Mammary epithelial cell (primary cell): ENCODE measurements at regions of chr20 and their contacts with region 1.

Region 1: DNA sequence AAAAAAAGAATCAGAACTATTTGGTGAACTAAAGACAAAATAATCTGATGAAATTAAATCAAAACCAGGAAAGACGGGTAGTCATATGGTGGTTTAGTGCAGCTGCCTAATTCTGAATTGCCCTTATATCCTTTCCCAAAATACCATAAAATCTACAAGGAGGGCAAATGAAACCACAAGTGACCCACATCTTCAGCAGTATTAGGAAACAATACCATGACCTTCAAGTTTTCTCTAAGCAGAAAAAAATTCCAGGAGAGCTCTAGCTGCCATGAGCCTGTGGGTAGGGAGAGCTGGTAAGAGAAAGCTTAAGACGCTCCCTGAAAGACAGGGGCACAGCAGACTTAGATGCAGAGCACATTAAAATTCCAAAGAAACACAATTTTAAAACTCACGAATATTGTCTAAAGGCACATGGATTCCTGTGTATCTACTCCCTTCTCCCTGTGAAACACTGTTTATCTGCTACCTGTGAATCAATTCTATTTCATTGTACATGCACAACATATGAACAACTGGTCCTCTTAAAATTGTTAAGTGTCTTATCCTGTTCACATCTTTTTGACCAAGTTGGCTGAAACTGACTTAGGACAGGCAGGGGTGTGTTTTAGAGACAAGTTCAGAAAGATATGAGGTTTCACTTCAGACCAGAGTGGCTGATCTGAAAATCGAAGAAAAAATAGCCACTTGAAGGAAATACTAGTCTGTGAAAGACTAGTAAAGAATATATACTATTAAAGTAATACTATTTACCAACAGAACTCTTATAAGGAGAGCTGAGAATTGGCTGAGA is 153.6 kb upstream of the SHLD1 start:
- DNase-seq: no peak
- H3K4me3 ChIP-seq: no peak overlapping the region
- H3K27ac ChIP-seq: no peak overlapping the region
- H3K4me1 ChIP-seq: no peaks in the 10 kb centered on the region
- H3K27me3 ChIP-seq: no peaks in the 10 kb centered on the region
- CTCF ChIP-seq: no peak

Region 2: GRCh38 chr20:5080384-5080877 is 516.2 kb before region 1 on chr20:
- CTCF ChIA-PET with region 1: no interaction called
- dilution Hi-C with region 1: no loop called
- in situ Hi-C with region 1: no loop called
- intact Hi-C with region 1: no loop called
- DNase-seq: no peak
- H3K4me3 ChIP-seq: no peak overlapping the region
- H3K27ac ChIP-seq: no peak overlapping the region
- H3K4me1 ChIP-seq: no peaks in the 10 kb centered on the region
- H3K27me3 ChIP-seq: no peaks in the 10 kb centered on the region
- CTCF ChIP-seq: no peak

Region 3: DNA sequence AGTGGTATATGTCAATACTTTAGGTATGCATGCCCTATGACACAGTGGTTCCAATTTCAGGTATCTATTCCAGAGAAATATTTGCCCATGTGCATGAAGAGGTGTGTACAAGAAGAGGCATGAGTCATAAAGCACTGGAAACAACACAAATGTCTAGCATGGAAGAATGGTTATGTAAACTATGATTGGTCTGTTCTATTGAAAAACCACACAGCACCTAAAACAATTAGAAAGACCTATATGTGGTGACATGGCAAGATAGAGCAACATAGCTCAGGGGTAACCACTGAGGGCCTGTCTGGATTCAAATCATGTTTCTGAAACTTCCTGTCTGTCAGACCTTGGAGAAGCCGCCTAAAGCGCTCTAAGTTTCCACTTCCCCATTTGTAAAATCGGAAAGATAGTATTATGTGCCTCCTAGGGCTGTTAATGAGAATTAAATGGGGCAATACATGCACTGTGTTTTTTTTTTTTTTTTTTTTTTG is 77.6 kb after region 1 on chr20:
- CTCF ChIA-PET with region 1: no interaction called
- dilution Hi-C with region 1: no loop called
- in situ Hi-C with region 1: no loop called
- intact Hi-C with region 1: no loop called
- DNase-seq: peak; percentile 90
- H3K4me3 ChIP-seq: no peak overlapping the region
- H3K27ac ChIP-seq: no peak overlapping the region
- H3K4me1 ChIP-seq: peaks cover 14% of the 10 kb centered on the region
- H3K27me3 ChIP-seq: no peaks in the 10 kb centered on the region
- CTCF ChIP-seq: no peak

Region 4: DNA sequence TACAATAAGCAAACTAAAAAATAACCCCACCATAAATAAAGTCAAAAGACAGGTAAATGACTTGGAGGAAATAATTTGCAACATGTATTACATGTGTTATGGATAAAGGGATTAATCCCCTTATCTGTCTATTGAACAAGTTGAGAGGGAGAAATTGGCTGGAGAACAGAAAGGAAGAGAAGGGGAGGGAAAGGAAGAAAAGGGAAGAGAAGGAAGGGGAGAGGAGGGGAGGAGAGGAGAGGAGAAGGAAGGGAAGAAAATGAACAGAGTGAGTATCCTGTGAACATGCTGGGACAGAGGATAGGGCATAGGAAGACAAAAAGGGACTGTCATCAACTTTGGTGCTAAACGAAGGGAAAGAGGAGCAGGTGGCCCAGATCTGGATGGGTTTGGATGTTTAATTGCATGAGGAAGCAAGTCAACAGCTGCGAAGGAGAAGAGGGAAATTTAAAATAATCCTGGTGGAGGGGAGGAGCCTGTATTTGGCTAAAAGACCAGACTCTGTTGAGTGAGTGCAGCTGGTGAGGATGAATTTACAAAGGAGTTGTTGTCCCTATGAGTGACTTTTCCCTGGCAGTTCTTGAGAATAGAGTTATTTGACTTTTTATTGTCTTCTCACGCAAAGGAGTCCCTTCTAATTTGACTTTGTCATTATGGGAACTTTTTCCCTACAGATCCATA is 139.4 kb after region 1 on chr20:
- CTCF ChIA-PET with region 1: no interaction called
- dilution Hi-C with region 1: no loop called
- in situ Hi-C with region 1: no loop called
- intact Hi-C with region 1: no loop called
- DNase-seq: no peak
- H3K4me3 ChIP-seq: no peak overlapping the region
- H3K27ac ChIP-seq: no peak overlapping the region
- H3K4me1 ChIP-seq: no peaks in the 10 kb centered on the region
- H3K27me3 ChIP-seq: peaks cover 2% of the 10 kb centered on the region
- CTCF ChIP-seq: no peak

Region 5: GRCh38 chr20:5757949-5758348 is 161.4 kb after region 1 on chr20:
- CTCF ChIA-PET with region 1: no interaction called
- dilution Hi-C with region 1: no loop called
- in situ Hi-C with region 1: no loop called
- intact Hi-C with region 1: no loop called
- DNase-seq: no peak
- H3K4me3 ChIP-seq: no peak overlapping the region
- H3K27ac ChIP-seq: no peak overlapping the region
- H3K4me1 ChIP-seq: peaks cover 13% of the 10 kb centered on the region
- H3K27me3 ChIP-seq: no peaks in the 10 kb centered on the region
- CTCF ChIP-seq: no peak

Region 6: GRCh38 chr20:5779071-5779900 is 182.7 kb after region 1 on chr20:
- CTCF ChIA-PET with region 1: no interaction called
- dilution Hi-C with region 1: no loop called
- in situ Hi-C with region 1: loop called in 1 of 2 experiments (anchors 10 kb)
- intact Hi-C with region 1: no loop called
- DNase-seq: peak; percentile 44
- H3K4me3 ChIP-seq: no peak overlapping the region
- H3K27ac ChIP-seq: no peak overlapping the region
- H3K4me1 ChIP-seq: no peaks in the 10 kb centered on the region
- H3K27me3 ChIP-seq: no peaks in the 10 kb centered on the region
- CTCF ChIP-seq: no peak